Activated CD8-positive, alpha-beta T cell treated with anti-CD3 and anti-CD28 coated beads for 36 hours (primary cell): ENCODE measurements at regions of chr3 and their contacts with region 1.

Region 1: DNA sequence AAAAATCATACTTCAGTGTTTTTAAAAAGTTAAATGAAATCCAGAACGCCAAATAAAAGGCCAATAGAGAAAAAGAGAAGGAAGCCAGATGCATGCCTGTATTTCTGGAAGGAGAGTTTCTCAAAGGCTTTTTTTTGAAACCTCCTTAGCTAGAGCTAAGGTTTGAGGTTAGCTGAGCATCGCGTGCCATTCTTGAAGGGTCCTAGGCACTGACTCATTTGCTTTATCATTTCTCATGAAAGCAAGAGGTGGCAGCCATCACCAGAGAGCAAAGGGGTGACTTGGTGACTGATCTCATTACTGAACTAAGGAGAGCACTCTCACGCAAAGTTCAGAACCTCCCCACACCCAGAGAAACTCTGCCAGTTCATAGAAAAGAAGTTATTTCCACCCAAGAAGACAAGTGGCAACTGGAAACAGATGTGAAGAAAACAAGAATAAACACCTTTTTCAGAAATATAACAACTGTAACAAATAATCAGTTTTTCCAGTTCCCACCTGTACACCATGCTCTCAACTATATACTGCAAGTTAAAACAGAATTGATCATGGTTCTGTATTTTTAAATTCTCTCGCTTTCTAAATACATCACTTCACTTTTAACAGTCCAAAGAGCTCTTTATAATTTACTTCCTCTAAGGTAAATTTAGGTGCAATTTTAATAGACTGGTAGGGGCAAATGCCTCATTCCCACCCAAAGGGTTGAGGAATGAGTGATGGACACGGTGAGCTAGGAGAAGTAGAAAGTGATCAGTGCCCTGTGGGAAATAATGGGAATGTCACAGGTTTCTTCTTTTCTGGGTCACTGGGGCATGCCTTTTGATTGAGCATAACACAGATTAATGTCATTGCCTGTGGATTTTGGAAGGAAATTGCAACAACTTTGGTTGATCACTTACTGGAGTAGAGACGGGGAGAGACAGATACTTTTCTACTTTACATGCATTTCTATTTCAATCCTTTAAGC is 24.7 kb downstream of the GPR15 start:
- DNase-seq: peak; percentile 91
- ATAC-seq: peak; percentile 73
- H3K4me3 Mint-ChIP-seq: peak overlapping the region; percentile 67
- H3K27ac Mint-ChIP-seq: peak overlapping the region; percentile 97
- H3K4me1 Mint-ChIP-seq: peaks cover 82% of the 10 kb centered on the region
- H3K27me3 Mint-ChIP-seq: no peaks in the 10 kb centered on the region
- CTCF ChIP-seq: no peak

Region 2: DNA sequence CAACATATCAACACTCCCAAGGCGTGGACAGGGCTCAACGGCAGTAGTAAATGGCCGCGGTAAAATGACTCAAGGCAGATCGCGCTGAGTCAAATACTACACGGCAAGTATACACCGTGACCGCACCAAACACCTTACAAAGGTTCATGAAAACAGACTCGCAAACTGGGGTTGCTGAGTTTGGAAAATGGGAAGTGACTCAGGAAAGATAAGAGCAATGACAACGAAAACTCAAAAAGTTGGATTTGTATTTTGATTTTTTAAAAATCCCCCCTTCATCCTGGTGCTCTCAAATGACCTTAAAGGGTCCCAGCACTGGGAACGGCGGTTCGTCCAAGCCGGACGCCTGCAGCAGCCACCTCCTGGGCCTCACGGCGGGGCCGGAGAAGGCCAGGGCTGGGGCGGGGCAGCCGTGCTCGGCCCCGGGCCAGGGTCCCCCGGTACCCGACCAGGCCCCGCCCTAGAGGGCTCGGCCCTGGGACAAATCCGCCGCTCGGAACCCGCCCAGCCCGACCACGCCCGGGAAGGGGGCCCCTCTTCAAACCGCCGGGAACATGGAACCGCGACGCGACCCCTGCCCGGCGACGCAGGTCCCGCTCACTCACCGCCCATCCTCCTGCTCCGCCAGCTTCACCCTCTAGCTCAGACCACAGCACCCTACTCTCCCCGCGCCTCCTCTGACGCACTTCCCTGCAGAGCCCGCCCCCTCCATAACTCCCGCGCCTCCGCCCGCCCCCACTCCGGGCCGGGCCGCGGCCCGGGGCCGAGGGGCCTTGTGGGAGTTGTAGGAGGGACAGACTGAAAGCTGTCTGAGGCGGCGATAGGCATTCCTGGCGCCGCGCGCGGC is 34.0 kb before region 1 on chr3 and contains the start of gene CLDND1:
- CTCF ChIA-PET with region 1: interaction called, 10 read pairs
- POLR2A ChIA-PET with region 1: interaction called, 21 read pairs
- intact Hi-C with region 1: loop called (anchors 2 kb)
- DNase-seq: peak; percentile 97
- ATAC-seq: peak; percentile 96
- H3K4me3 Mint-ChIP-seq: peak within 1 kb of the TSS; percentile 89
- H3K27ac Mint-ChIP-seq: peak within 1 kb of the TSS; percentile 95
- H3K4me1 Mint-ChIP-seq: peaks cover 62% of the 10 kb centered on the region
- H3K27me3 Mint-ChIP-seq: no peaks in the 10 kb centered on the region
- CTCF ChIP-seq: no peak
- total RNA-seq, gene CLDND1: 190 to 198 TPM

Region 3: GRCh38 chr3:98531622-98532274 is 24.7 kb before region 1 on chr3 and contains the start of gene GPR15:
- CTCF ChIA-PET with region 1: interaction called, 6 read pairs
- POLR2A ChIA-PET with region 1: interaction called, 204 read pairs
- intact Hi-C with region 1: no loop called
- DNase-seq: no peak
- ATAC-seq: no peak
- H3K4me3 Mint-ChIP-seq: peak within 1 kb of the TSS; percentile 54
- H3K27ac Mint-ChIP-seq: peak within 1 kb of the TSS; percentile 76
- H3K4me1 Mint-ChIP-seq: peaks cover 35% of the 10 kb centered on the region
- H3K27me3 Mint-ChIP-seq: no peaks in the 10 kb centered on the region
- CTCF ChIP-seq: no peak
- total RNA-seq, gene GPR15: 1.4 to 2.2 TPM